GM10248 (cell line): ENCODE measurements at regions of chr18 and their contacts with region 1.

Region 1: DNA sequence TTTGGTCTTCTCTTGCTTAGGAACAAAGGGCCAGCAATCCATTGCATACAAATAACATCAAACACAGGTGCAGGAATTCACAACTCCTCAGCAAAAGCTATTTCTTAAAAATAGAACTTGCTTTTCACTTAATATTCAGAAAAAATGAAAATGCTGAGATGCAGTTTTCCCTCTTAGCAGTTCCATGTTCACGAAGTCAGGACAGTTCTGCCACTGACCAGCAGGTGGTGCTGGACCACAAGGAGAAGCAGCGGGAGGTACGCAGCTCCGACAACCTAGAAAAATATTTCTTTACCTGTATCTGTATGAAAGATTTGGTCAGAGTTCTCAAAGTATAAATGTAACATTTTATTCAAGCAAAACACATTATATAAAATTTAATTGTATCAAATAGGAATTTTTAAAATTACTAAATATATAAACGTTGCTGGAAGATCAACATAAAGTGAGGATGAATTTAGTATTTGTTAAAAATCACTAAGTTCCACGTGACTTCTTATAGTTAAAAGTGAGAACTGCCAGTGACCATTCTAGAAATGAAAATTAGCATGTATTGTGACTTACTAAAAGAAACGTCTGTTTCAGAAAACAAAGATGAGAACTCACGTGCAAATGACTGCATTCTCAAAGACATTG is 48.8 kb downstream of the ADNP2 start:
- DNase-seq: peak; percentile 68
- CTCF ChIP-seq: peak; percentile 94

Region 2: GRCh38 chr18:79567481-79568147 is 590.2 kb before region 1 on chr18:
- CTCF ChIA-PET with region 1: no interaction called
- POLR2A ChIA-PET with region 1: no interaction called
- DNase-seq: no peak
- CTCF ChIP-seq: no peak

Region 3: GRCh38 chr18:80136679-80137078 is 21.1 kb before region 1 on chr18:
- CTCF ChIA-PET with region 1: interaction called, 42 read pairs
- POLR2A ChIA-PET with region 1: no interaction called
- DNase-seq: no peak
- CTCF ChIP-seq: no peak

Region 4: GRCh38 chr18:80147418-80148325 is 10.2 kb before region 1 on chr18:
- CTCF ChIA-PET with region 1: interaction called, 42 read pairs
- POLR2A ChIA-PET with region 1: no interaction called
- DNase-seq: peak; percentile 76
- CTCF ChIP-seq: no peak

Region 5: GRCh38 chr18:80171054-80171872 is 13.4 kb after region 1 on chr18:
- CTCF ChIA-PET with region 1: interaction called, 74 read pairs
- POLR2A ChIA-PET with region 1: no interaction called
- DNase-seq: peak; percentile 80
- CTCF ChIP-seq: peak; percentile 80

Region 6: GRCh38 chr18:80200171-80200931 is 42.5 kb after region 1 on chr18:
- CTCF ChIA-PET with region 1: interaction called, 17 read pairs
- POLR2A ChIA-PET with region 1: no interaction called
- DNase-seq: peak; percentile 11
- CTCF ChIP-seq: peak; percentile 2

Region 7: DNA sequence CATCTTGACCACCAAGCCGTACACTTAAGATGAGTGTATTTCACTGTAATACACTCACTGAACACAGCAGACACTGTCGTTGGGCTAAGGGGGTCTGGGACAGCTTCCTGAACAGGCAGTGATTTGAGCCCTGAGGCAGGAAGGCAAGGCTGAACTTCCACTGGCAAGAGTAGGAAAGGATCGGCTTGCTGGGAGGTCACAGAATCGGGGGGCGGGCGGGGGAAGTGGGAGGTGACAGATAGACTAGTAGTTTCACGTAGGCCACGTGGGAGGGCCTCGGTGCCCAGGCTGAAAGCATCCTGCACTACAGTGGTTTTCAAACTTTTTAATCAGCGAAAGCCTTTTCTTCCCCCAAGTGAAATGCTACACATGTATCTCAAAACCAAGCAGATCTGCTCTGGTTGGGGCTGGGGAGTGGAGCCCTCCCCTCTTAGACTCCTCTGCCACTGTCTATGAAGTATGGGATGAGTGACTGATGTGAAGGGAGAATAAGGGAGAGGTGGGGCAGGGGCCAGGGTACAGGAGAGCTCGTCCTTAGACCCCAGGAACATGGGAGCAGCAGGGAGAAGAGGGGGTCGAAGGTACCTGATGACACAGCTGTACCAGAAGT is 80.9 kb after region 1 on chr18:
- CTCF ChIA-PET with region 1: interaction called, 12 read pairs
- POLR2A ChIA-PET with region 1: no interaction called
- DNase-seq: no peak
- CTCF ChIP-seq: no peak

Region 8: GRCh38 chr18:80253871-80254492 is 96.2 kb after region 1 on chr18:
- CTCF ChIA-PET with region 1: interaction called, 75 read pairs
- POLR2A ChIA-PET with region 1: no interaction called
- DNase-seq: no peak
- CTCF ChIP-seq: no peak